CD4-positive, alpha-beta T cell (primary cell): ENCODE measurements at regions of chr17 and their contacts with region 1.

Region 1: GRCh38 chr17:7915611-7916382 is at the start of gene RNF227:
- DNase-seq: peak; percentile 68 to 94 (median 74)
- ATAC-seq: peak; percentile 73
- H3K4me3 ChIP-seq: peak within 1 kb of the TSS; percentile 77
- H3K4me3 Mint-ChIP-seq: peak within 1 kb of the TSS; percentile 89
- H3K27ac ChIP-seq: peak within 1 kb of the TSS; percentile 71 to 80
- H3K27ac Mint-ChIP-seq: peak within 1 kb of the TSS; percentile 90
- H3K4me1 ChIP-seq: peaks cover 35% of the 10 kb centered on the region
- H3K4me1 Mint-ChIP-seq: peaks cover 30% of the 10 kb centered on the region
- H3K27me3 ChIP-seq: no peaks in the 10 kb centered on the region
- H3K27me3 Mint-ChIP-seq: no peaks in the 10 kb centered on the region
- CTCF ChIP-seq: no peak
- total RNA-seq, gene RNF227: 3.2 to 3.5 TPM

Region 2: DNA sequence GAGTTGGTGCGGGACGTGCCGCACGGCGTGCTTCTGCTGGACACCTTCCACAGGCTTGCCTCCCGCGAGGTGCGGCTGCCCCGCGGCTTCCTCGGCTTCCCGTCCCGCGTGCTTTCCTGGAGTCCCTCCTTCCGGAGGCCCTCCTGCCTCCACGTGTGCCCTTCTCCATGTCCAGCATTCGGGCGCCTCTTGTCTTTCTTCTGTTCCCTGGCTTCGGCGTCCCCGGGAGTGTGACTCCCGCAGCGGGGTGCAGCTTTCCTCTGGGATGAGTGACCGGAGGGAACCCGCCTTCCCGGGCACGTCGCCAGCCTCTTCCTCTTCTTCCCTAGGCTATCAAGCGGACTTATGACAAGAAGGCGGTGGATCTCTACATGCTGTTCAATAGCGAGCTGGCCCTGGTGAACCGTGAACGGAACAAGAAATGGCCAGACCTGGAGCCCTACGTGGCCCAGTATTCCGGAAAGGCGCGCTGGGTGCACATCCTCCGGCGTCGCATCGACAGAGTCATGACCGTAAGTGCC is 175.3 kb before region 1 on chr17:
- CTCF ChIA-PET with region 1: interaction called, 6 read pairs
- POLR2A ChIA-PET with region 1: no interaction called
- intact Hi-C with region 1: loop called (anchors 2 to 5 kb)
- DNase-seq: no peak
- ATAC-seq: no peak
- H3K4me3 ChIP-seq: no peak overlapping the region
- H3K4me3 Mint-ChIP-seq: no peak overlapping the region
- H3K27ac ChIP-seq: no peak overlapping the region
- H3K27ac Mint-ChIP-seq: no peak overlapping the region
- H3K4me1 ChIP-seq: no peaks in the 10 kb centered on the region
- H3K4me1 Mint-ChIP-seq: no peaks in the 10 kb centered on the region
- H3K27me3 ChIP-seq: peaks cover 6 to 12% of the 10 kb centered on the region in 2 experiments
- H3K27me3 Mint-ChIP-seq: peaks cover 39% of the 10 kb centered on the region
- CTCF ChIP-seq: no peak

Region 3: DNA sequence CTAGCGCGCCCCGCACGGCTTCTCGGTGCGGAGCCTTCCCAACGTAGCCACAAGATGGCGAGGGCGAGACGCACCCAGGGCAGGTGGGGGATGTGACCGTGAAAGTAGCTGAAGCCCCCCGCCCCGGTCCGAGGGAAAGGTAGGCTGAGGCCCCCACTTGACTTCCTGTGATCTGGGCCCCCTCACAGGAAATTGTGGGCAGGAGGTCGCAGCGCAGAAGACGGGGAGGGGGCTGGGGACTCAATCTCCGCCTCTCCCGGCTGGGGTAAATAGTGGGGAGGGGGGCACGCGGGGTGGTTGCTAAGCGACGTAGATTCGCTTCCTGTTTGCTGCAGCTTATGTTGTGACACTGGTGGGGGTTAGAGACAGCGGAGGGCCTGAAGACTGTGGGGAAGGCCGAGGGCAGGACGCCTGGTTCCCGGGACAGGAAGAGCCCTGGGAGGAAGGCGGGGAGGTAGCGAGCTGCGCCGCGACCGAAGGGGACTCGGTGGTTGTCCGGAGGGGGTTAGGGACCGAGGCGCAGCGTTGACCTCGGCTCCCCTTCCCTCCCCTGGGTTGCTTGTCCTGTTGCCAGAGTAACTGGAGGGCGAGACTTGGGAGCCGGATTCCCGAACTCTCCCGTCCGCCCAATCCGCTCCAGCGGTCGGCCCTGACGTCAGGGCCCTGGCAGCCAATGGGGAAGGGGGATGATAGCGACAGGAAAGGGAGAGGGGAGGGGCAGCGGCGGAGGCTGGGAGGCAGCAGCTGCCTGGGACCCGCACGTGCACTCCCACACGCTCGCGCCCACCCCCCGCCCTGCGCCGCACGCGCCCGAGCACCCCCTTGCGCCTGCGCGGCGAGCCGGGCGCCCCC is 80.6 kb before region 1 on chr17:
- CTCF ChIA-PET with region 1: interaction called, 3 read pairs
- POLR2A ChIA-PET with region 1: interaction called, 11 read pairs
- intact Hi-C with region 1: no loop called
- DNase-seq: peak; percentile 74 to 98 (median 86)
- ATAC-seq: peak; percentile 54
- H3K4me3 ChIP-seq: peak overlapping the region; percentile 82
- H3K4me3 Mint-ChIP-seq: peak overlapping the region; percentile 93
- H3K27ac ChIP-seq: peak overlapping the region; percentile 98 to 100
- H3K27ac Mint-ChIP-seq: peak overlapping the region; percentile 98
- H3K4me1 ChIP-seq: peaks cover 62% of the 10 kb centered on the region
- H3K4me1 Mint-ChIP-seq: peaks cover 42% of the 10 kb centered on the region
- H3K27me3 ChIP-seq: no peaks in the 10 kb centered on the region
- H3K27me3 Mint-ChIP-seq: peaks cover 4% of the 10 kb centered on the region
- CTCF ChIP-seq: peak; percentile 84

Region 4: GRCh38 chr17:7862692-7863437 is 52.9 kb before region 1 on chr17:
- CTCF ChIA-PET with region 1: interaction called, 9 read pairs
- POLR2A ChIA-PET with region 1: interaction called, 11 read pairs
- intact Hi-C with region 1: loop called (anchors 10 kb)
- DNase-seq: peak in 9 of 14 experiments; percentile 31 to 70 (median 44)
- ATAC-seq: no peak
- H3K4me3 ChIP-seq: no peak overlapping the region
- H3K4me3 Mint-ChIP-seq: no peak overlapping the region
- H3K27ac ChIP-seq: no peak overlapping the region
- H3K27ac Mint-ChIP-seq: no peak overlapping the region
- H3K4me1 ChIP-seq: peaks cover 17% of the 10 kb centered on the region
- H3K4me1 Mint-ChIP-seq: peaks cover 18% of the 10 kb centered on the region
- H3K27me3 ChIP-seq: no peaks in the 10 kb centered on the region
- H3K27me3 Mint-ChIP-seq: no peaks in the 10 kb centered on the region
- CTCF ChIP-seq: peak; percentile 97

Region 5: DNA sequence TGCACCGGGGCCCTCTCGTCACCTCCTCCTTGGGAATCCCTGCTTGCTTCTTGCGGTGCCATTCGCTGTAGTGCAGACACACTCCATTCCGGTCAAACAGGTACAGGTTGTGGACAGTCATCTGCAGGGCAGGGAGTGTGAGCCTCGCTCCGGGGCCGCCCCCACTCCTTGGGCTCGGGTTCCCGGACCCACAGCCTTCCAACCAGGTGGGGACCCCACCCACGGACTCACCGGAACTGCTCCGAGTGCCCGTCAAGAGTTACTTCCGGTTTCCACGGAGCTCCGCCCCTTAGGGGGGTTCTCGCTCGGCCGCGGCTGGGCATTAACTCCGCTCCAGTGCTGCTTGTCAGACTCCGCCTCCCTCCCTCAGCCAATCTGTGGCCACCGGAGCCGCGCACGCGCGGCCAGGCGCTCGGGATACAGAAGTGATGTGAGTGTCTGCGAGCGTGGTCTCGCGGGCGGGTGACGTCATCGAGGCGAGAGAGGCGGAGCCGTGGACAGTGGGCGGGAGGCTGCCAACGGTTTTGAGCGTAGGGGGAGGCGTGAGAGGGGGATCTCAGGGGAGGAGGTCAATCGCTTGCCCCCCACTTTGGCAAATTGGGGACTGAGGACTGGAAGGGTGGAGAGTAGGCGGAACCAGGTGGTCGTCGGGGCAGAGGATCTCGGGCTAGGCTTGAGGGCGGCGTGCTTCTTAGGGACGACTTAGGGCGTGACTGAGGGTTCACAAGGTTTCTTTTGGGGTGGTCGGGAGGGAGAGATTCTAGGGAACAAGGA is 16.1 kb after region 1 on chr17 and contains the starts of genes CNTROB and TRAPPC1:
- CTCF ChIA-PET with region 1: interaction called, 10 read pairs
- POLR2A ChIA-PET with region 1: interaction called, 60 read pairs
- intact Hi-C with region 1: loop called (anchors 1 to 2 kb)
- DNase-seq: peak; percentile 97 to 100 (median 99)
- ATAC-seq: peak; percentile 92
- H3K4me3 ChIP-seq: peak within 1 kb of the TSS; percentile 94
- H3K4me3 Mint-ChIP-seq: peak within 1 kb of the TSS; percentile 97
- H3K27ac ChIP-seq: peak within 1 kb of the TSS; percentile 83
- H3K27ac Mint-ChIP-seq: peak within 1 kb of the TSS; percentile 90
- H3K4me1 ChIP-seq: peaks cover 40% of the 10 kb centered on the region
- H3K4me1 Mint-ChIP-seq: peaks cover 49% of the 10 kb centered on the region
- H3K27me3 ChIP-seq: no peaks in the 10 kb centered on the region
- H3K27me3 Mint-ChIP-seq: no peaks in the 10 kb centered on the region
- CTCF ChIP-seq: no peak
- total RNA-seq, gene CNTROB: 20.6 to 21.9 TPM
- total RNA-seq, gene TRAPPC1: 39.3 to 39.5 TPM

Region 6: GRCh38 chr17:8041249-8041928 is 125.6 kb after region 1 on chr17:
- CTCF ChIA-PET with region 1: interaction called, 7 read pairs
- POLR2A ChIA-PET with region 1: interaction called, 4 read pairs
- intact Hi-C with region 1: loop called (anchors 5 kb)
- DNase-seq: peak in 8 of 14 experiments; percentile 17 to 72 (median 44)
- ATAC-seq: peak; percentile 37
- H3K4me3 ChIP-seq: no peak overlapping the region
- H3K4me3 Mint-ChIP-seq: no peak overlapping the region
- H3K27ac ChIP-seq: no peak overlapping the region
- H3K27ac Mint-ChIP-seq: no peak overlapping the region
- H3K4me1 ChIP-seq: peaks cover 4% of the 10 kb centered on the region
- H3K4me1 Mint-ChIP-seq: peaks cover 4% of the 10 kb centered on the region
- H3K27me3 ChIP-seq: peaks cover 11 to 21% of the 10 kb centered on the region in 2 experiments
- H3K27me3 Mint-ChIP-seq: peaks cover 40% of the 10 kb centered on the region
- CTCF ChIP-seq: peak; percentile 50